ENCODE measurements at regions of chrX and their contacts with region 1.

Region 1: GRCh38 chrX:44542567-44543325 is at the start of gene FUNDC1:
- DNase-seq: peak; percentile 93
- ATAC-seq: peak; percentile 97
- H3K4me3 Mint-ChIP-seq: peak within 1 kb of the TSS; percentile 81
- H3K27ac Mint-ChIP-seq: peak within 1 kb of the TSS; percentile 85
- H3K4me1 Mint-ChIP-seq: peaks cover 18% of the 10 kb centered on the region
- H3K27me3 Mint-ChIP-seq: no peaks in the 10 kb centered on the region
- total RNA-seq, gene FUNDC1: 12.4 to 12.5 TPM

Region 2: DNA sequence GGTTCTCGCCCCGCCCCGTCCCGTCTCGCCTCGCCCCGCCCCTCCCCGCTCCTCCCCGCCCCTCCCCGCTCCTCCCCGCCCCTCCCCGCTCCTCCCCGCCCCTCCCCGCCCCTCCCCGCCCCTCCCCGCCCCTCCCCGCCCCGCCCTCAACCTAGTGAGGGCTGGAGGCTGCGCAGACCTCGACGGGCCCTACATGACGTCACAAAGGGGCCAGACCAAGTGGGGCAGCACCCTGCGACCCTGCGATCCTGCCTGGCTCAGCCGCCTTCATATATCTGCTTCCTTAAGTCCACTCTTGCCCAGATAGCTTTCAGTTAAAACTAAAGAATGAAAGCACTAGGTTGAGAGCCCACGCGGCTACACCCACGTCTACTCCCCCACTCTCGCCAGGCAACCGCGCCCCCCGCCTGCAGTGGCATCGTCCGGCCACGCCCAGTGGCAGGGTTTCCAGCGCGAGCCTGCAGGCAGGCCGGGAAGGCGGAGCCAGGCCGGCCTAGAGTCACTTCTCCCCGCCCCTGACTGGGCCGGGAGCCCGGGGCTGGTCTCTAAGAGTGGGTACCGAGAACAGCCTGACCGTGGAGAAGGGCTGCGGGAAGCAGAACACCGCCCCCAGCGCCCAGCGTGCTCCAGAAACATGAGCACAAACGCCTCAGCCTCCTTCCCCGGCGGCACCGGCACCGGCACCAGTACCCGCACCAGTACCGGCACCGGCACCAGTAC is 888.2 kb before region 1 on chrX:
- CTCF ChIA-PET with region 1: no interaction called
- POLR2A ChIA-PET with region 1: no interaction called
- intact Hi-C with region 1: loop called in 1 of 2 experiments (anchors 10 kb)
- DNase-seq: peak; percentile 89
- ATAC-seq: peak; percentile 97
- H3K4me3 Mint-ChIP-seq: peak overlapping the region; percentile 80
- H3K27ac Mint-ChIP-seq: peak overlapping the region; percentile 98
- H3K4me1 Mint-ChIP-seq: peaks cover 5% of the 10 kb centered on the region
- H3K27me3 Mint-ChIP-seq: no peaks in the 10 kb centered on the region

Region 3: GRCh38 chrX:43958529-43958928 is 584.2 kb before region 1 on chrX:
- CTCF ChIA-PET with region 1: no interaction called
- POLR2A ChIA-PET with region 1: no interaction called
- intact Hi-C with region 1: loop called in 1 of 2 experiments (anchors 1 kb)
- DNase-seq: peak; percentile 6
- ATAC-seq: peak; percentile 65
- H3K4me3 Mint-ChIP-seq: no peak overlapping the region
- H3K27ac Mint-ChIP-seq: no peak overlapping the region
- H3K4me1 Mint-ChIP-seq: peaks cover 2% of the 10 kb centered on the region
- H3K27me3 Mint-ChIP-seq: no peaks in the 10 kb centered on the region

Region 4: DNA sequence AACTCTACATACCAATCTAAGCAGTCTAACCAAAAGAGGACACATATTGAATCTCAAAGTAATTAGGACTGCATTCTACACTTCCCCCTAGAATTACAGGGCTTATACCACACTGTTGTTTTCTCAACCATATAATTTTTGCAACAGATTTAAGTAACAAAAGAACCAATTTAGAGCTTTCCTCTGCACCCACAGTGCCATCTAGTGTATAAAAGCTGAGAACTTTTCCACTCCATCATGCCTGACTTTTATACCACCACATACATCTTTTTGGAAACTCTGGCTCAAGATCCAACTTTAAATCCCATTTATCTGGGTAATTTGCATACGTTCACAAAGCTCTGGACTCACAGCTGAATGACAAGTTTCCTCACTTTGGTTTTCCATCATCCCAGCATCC is 298.7 kb before region 1 on chrX:
- CTCF ChIA-PET with region 1: no interaction called
- POLR2A ChIA-PET with region 1: no interaction called
- intact Hi-C with region 1: loop called in 1 of 2 experiments (anchors 10 kb)
- DNase-seq: no peak
- ATAC-seq: no peak
- H3K4me3 Mint-ChIP-seq: no peak overlapping the region
- H3K27ac Mint-ChIP-seq: no peak overlapping the region
- H3K4me1 Mint-ChIP-seq: peaks cover 12% of the 10 kb centered on the region
- H3K27me3 Mint-ChIP-seq: no peaks in the 10 kb centered on the region

Region 5: GRCh38 chrX:44343412-44344141 is 199.2 kb before region 1 on chrX and contains the start of gene EFHC2:
- CTCF ChIA-PET with region 1: no interaction called
- POLR2A ChIA-PET with region 1: no interaction called
- intact Hi-C with region 1: loop called in 1 of 2 experiments (anchors 2 kb)
- DNase-seq: peak; percentile 59
- ATAC-seq: peak; percentile 63
- H3K4me3 Mint-ChIP-seq: peak within 1 kb of the TSS; percentile 73
- H3K27ac Mint-ChIP-seq: peak within 1 kb of the TSS; percentile 77
- H3K4me1 Mint-ChIP-seq: peaks cover 11% of the 10 kb centered on the region
- H3K27me3 Mint-ChIP-seq: no peaks in the 10 kb centered on the region
- total RNA-seq, gene EFHC2: 0.30 to 0.46 TPM

Region 6: DNA sequence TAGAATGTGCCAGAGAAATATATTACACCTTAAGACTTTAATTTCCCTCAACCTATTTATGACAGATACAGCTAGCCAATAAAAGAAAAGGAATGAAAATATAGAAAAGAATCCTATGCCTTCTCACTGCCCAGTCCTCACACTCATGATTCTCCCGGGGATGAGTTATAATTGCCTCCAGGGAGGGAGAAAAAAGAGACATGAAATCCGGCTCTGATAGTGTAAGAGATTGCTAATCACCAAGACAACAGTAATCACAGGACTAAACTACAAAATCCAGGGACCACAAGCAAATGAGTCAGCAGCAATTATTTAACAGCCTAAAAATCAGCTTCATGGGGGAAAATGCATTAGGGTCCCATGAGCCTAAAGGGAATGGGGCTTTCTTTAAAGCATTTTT is 205.2 kb after region 1 on chrX:
- CTCF ChIA-PET with region 1: no interaction called
- POLR2A ChIA-PET with region 1: no interaction called
- intact Hi-C with region 1: no loop called
- DNase-seq: no peak
- ATAC-seq: no peak
- H3K4me3 Mint-ChIP-seq: no peak overlapping the region
- H3K27ac Mint-ChIP-seq: no peak overlapping the region
- H3K4me1 Mint-ChIP-seq: no peaks in the 10 kb centered on the region
- H3K27me3 Mint-ChIP-seq: no peaks in the 10 kb centered on the region

Region 7: DNA sequence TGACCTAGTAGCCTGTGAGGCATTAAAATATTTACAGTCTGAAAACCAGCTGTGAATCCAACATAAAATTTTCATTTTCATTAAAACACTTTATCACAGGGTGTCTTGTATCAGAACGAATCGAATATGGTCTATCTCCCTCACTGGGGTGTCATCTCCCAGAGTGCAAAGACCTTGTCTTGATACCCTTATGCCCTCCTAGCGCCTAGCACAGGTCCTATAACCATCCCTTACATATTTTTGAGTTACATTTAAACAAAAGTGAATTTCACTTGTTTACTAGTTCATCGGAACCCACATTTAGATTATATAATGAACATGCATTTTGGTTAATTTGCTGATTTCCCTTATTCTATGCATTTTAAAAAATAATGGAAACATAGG is 643.9 kb after region 1 on chrX:
- CTCF ChIA-PET with region 1: no interaction called
- POLR2A ChIA-PET with region 1: no interaction called
- intact Hi-C with region 1: loop called in 1 of 2 experiments (anchors 5 kb)
- DNase-seq: no peak
- ATAC-seq: no peak
- H3K4me3 Mint-ChIP-seq: peak overlapping the region; percentile 70
- H3K27ac Mint-ChIP-seq: peak overlapping the region; percentile 72
- H3K4me1 Mint-ChIP-seq: peaks cover 31% of the 10 kb centered on the region
- H3K27me3 Mint-ChIP-seq: no peaks in the 10 kb centered on the region